CD4-positive, alpha-beta memory T cell (primary cell): ENCODE measurements at regions of chr4 and their contacts with region 1.

Region 1: DNA sequence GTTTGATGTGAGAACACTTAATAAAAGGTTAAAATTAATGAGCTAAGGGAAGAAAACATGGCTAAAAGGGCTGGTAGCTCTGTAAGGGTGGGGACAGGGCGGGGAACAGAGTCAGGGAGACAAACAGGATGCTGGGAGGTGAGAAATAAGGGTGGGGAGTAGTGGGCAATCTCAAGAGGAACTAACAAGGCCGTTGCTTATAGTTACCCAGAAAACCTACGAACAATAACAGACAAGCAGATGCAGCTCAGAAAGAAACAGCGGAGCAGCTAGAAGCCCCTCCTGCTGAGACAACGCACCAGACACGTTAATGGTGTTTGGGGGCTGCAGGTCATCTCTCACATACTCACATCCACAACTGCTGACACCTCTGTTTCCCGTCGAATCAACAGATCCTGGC is 9.7 kb upstream of the KLF3 start:
- DNase-seq: peak; percentile 73 to 84 (median 76)
- H3K4me3 ChIP-seq: peak overlapping the region in 1 of 2 donors; percentile 4
- H3K4me3 Mint-ChIP-seq: peak overlapping the region; percentile 78 to 88 (median 81)
- H3K27ac ChIP-seq: peak overlapping the region; percentile 78
- H3K27ac Mint-ChIP-seq: peak overlapping the region; percentile 82 to 100 (median 99)
- H3K4me1 ChIP-seq: peaks cover 61% of the 10 kb centered on the region
- H3K4me1 Mint-ChIP-seq: peaks cover 39 to 69% (median 54%) of the 10 kb centered on the region in 4 donors
- H3K27me3 ChIP-seq: no peaks in the 10 kb centered on the region
- H3K27me3 Mint-ChIP-seq: no peaks in the 10 kb centered on the region

Region 2: GRCh38 chr4:38310446-38311043 is 343.7 kb before region 1 on chr4:
- CTCF ChIA-PET with region 1: interaction called, 4 read pairs
- POLR2A ChIA-PET with region 1: interaction called, 11 read pairs
- intact Hi-C with region 1: no loop called
- DNase-seq: peak; percentile 83 to 91 (median 86)
- H3K4me3 ChIP-seq: peak overlapping the region in 1 of 2 donors; percentile 41
- H3K4me3 Mint-ChIP-seq: peak overlapping the region; percentile 64 to 88 (median 76)
- H3K27ac ChIP-seq: peak overlapping the region; percentile 33
- H3K27ac Mint-ChIP-seq: peak overlapping the region; percentile 84 to 96 (median 92)
- H3K4me1 ChIP-seq: peaks cover 53% of the 10 kb centered on the region
- H3K4me1 Mint-ChIP-seq: peaks cover 39 to 71% (median 54%) of the 10 kb centered on the region in 4 donors
- H3K27me3 ChIP-seq: no peaks in the 10 kb centered on the region
- H3K27me3 Mint-ChIP-seq: no peaks in the 10 kb centered on the region

Region 3: GRCh38 chr4:38381788-38382187 is 272.5 kb before region 1 on chr4:
- CTCF ChIA-PET with region 1: no interaction called
- POLR2A ChIA-PET with region 1: no interaction called
- intact Hi-C with region 1: no loop called
- DNase-seq: no peak
- H3K4me3 ChIP-seq: no peak overlapping the region
- H3K4me3 Mint-ChIP-seq: no peak overlapping the region
- H3K27ac ChIP-seq: no peak overlapping the region
- H3K27ac Mint-ChIP-seq: no peak overlapping the region
- H3K4me1 ChIP-seq: peaks cover 16% of the 10 kb centered on the region
- H3K4me1 Mint-ChIP-seq: peaks cover 6 to 22% (median 14%) of the 10 kb centered on the region in 4 donors
- H3K27me3 ChIP-seq: no peaks in the 10 kb centered on the region
- H3K27me3 Mint-ChIP-seq: peaks cover 0 to 1% of the 10 kb centered on the region in 2 donors

Region 4: GRCh38 chr4:38529189-38530115 is 124.8 kb before region 1 on chr4:
- CTCF ChIA-PET with region 1: interaction called, 3 read pairs
- POLR2A ChIA-PET with region 1: interaction called, 16 read pairs
- intact Hi-C with region 1: no loop called
- DNase-seq: peak; percentile 55 to 75 (median 62)
- H3K4me3 ChIP-seq: peak overlapping the region in 1 of 2 donors; percentile 1
- H3K4me3 Mint-ChIP-seq: peak overlapping the region in 7 of 8 donors; percentile 49 to 81 (median 58)
- H3K27ac ChIP-seq: peak overlapping the region; percentile 3
- H3K27ac Mint-ChIP-seq: peak overlapping the region; percentile 82 to 92 (median 88)
- H3K4me1 ChIP-seq: peaks cover 43% of the 10 kb centered on the region
- H3K4me1 Mint-ChIP-seq: peaks cover 23 to 69% (median 42%) of the 10 kb centered on the region in 4 donors
- H3K27me3 ChIP-seq: no peaks in the 10 kb centered on the region
- H3K27me3 Mint-ChIP-seq: no peaks in the 10 kb centered on the region

Region 5: GRCh38 chr4:38644201-38644600 is 10.1 kb before region 1 on chr4:
- CTCF ChIA-PET with region 1: interaction called, 4 read pairs
- POLR2A ChIA-PET with region 1: interaction called, 13 read pairs
- intact Hi-C with region 1: no loop called
- DNase-seq: no peak
- H3K4me3 ChIP-seq: no peak overlapping the region
- H3K4me3 Mint-ChIP-seq: no peak overlapping the region
- H3K27ac ChIP-seq: no peak overlapping the region
- H3K27ac Mint-ChIP-seq: no peak overlapping the region
- H3K4me1 ChIP-seq: peaks cover 11% of the 10 kb centered on the region
- H3K4me1 Mint-ChIP-seq: peaks cover 7 to 16% (median 12%) of the 10 kb centered on the region in 4 donors
- H3K27me3 ChIP-seq: no peaks in the 10 kb centered on the region
- H3K27me3 Mint-ChIP-seq: peaks cover 4% of the 10 kb centered on the region in 2 donors